Upper lobe of right lung (tissue), 1 donor: ENCODE measurements at regions of chr3 and their contacts with region 1.

Region 1: DNA sequence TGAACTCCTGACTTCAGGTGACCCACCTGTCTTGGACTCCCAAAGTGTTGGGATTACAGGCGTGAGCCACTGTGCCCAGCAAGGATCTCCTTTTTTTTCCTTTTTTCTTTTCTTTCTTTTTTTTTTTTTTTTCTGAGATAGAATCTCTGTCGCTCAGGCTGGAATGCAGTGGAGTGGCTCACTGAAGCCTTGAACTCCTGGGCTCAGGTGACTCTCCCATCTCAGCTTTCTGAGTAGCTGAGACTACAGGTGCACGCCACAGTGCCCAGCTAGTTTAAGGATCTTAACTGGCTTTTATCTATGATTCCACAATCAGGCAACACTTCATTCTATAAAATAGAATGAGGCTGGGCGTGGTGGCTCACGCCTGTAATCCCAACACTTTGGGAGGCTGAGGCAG is 16.3 kb upstream of the NICN1 start:
- DNase-seq: no peak
- ATAC-seq: no peak
- H3K4me3 ChIP-seq: no peak overlapping the region
- H3K27ac ChIP-seq: no peak overlapping the region
- H3K4me1 ChIP-seq: peaks cover 12% of the 10 kb centered on the region
- H3K27me3 ChIP-seq: no peaks in the 10 kb centered on the region
- CTCF ChIP-seq: no peak

Region 2: DNA sequence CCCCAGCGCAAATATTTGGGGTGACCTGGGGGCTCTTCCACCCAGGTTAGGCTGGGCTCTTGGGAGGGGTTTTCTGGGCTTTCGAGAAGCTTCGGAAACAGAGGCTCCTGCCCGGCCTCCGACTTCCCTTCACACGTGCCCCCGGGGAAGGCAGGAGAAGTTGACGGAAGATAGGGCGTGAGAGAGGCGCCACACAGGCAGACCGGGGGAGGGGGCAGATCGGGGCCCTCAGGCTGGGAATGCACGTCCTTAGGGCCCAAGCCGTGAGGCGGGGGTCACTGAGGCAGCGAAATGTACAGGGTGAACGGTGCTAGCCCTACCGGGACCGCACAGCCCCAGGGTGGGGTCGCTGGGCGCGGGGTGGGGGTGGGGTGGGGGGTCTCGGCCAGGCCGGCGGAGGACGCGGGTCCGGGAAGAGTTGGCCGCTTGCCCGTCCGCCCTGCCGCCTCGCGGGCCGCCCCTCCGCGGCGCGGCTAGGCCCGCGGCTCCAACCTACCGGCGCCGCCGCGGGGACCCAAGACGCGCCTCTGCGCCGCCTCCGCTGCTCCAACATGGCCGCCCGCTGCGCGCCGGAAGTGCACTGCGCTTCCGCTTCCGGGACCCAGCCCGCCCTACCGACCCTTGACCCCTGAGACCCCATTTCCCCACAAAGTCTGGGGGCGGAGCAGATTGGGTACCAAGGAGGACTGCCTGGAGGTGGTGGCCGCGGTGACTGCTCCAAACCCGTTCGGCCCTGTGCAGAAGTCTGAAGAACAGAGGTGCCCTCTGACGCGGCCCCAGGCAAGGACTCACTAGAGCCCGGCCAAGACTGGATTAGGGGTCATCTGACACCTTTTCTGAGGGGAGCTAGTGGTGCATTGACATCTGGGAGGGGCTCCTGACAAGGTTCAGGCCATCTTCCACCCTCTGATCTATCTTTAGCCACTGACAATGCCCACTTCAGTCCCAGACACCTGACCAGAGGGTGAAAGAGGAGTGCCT is 279.3 kb before region 1 on chr3 and contains the start of gene CCDC71:
- intact Hi-C with region 1: loop called (anchors 5 kb)
- DNase-seq: peak; percentile 91
- ATAC-seq: peak; percentile 85
- H3K4me3 ChIP-seq: peak within 1 kb of the TSS; percentile 92
- H3K27ac ChIP-seq: peak within 1 kb of the TSS; percentile 86
- H3K4me1 ChIP-seq: peaks cover 29% of the 10 kb centered on the region
- H3K27me3 ChIP-seq: no peaks in the 10 kb centered on the region
- CTCF ChIP-seq: no peak
- total RNA-seq, gene CCDC71: 22.1 TPM

Region 3: DNA sequence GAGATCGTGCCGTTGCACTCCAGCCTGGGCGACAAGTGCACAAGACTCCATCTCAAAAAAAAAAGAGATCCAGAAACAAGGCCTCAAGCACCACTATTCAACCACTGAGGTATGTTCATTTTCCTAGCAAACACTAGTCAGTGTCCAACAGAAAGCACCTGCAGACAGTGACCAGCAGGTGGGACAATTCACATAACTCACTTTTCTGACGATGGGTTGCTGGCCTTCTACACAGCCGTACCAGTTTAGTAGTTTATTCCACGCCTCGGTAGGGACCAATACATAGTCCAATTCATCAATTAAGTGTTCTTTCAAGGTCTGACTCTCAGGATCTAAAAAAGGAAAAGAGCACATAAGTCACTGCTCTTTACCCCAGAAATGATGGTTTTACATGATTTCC is 117.9 kb before region 1 on chr3:
- intact Hi-C with region 1: loop called (anchors 10 kb)
- DNase-seq: no peak
- ATAC-seq: peak; percentile 46
- H3K4me3 ChIP-seq: no peak overlapping the region
- H3K27ac ChIP-seq: no peak overlapping the region
- H3K4me1 ChIP-seq: peaks cover 3% of the 10 kb centered on the region
- H3K27me3 ChIP-seq: no peaks in the 10 kb centered on the region
- CTCF ChIP-seq: no peak

Region 4: DNA sequence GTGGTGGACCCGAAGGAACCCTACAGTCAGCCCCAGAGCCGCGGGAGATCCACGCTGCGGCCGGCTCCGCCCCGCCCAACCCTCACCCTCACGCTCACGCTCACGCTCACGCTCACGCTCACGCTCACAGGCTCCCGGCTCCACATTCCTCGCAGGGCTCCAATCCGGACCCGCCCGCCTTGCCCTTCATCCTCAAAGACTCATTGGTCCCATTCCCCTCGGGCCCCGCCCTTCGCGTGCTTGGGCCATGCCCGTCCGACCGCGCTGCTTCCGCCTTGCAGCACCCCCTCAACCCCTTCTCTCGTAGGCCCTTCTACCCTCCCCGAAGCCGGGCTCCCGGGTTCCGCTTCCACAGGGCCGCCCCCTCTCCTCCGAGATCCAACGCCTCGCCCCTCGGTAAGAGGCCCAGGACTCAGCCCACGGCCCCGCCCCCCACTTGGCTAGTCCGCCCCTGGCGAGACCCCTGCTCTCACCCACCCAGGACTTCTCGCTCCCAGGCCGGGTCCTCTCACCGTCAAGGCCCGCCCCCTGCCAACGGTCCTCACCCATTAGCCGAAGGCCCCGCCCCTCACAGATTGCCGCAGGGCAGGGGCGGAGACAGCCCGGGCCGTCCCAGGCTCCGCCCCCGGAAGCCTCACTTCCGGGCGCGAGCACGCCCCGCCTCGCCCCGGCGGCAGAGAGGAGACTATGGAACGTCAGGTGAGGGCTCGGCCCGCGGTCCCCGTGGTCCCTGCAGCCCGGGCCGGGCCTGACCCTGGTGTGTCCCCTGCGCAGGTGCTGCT is 228.5 kb after region 1 on chr3 and contains the start of gene APEH:
- intact Hi-C with region 1: no loop called
- DNase-seq: peak; percentile 99
- ATAC-seq: peak; percentile 93
- H3K4me3 ChIP-seq: peak within 1 kb of the TSS; percentile 90
- H3K27ac ChIP-seq: peak within 1 kb of the TSS; percentile 93
- H3K4me1 ChIP-seq: peaks cover 12% of the 10 kb centered on the region
- H3K27me3 ChIP-seq: no peaks in the 10 kb centered on the region
- CTCF ChIP-seq: peak; percentile 5
- total RNA-seq, gene APEH: 88.5 TPM